ENCODE measurements at regions of chr7 and their contacts with region 1.

Region 1: DNA sequence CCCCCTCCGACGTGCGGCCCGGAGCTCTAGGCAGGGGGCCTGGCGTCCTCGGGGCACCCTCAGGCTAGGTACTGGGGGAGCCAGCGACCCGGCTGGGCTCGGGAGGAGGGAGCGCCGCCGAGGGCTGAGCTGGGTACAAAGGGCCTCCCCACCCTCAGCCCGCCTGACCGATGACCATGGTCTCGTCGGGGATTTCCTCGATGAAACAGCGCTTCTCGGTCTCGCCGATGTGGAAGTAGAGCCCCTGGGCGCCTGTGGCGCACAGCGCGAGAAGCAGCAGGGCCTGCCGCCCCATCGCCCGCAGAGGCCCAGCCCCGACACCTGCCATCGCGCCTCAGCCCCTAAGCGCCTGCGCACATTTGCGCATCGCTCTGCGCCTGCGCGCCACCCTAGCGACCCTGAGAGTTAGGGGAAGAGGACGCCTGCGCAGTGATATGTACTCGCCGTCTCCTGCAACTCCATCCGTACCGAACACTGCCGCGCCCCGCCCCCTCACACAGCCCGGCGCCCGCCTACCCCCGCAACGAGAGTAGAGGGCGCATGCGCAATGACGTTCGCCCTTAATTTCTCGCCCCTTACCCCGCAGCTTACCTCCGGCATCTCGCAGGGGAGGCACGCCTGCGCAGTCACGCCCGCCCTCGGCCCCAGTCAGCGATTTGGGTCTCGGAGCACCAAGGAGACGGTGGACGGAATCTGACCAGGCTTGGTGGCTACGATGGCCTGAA is at the start of gene TMED4:
- DNase-seq: peak; percentile 100
- H3K4me3 ChIP-seq: peak within 1 kb of the TSS; percentile 86
- H3K27ac ChIP-seq: peak within 1 kb of the TSS; percentile 96
- H3K4me1 ChIP-seq: peaks cover 32% of the 10 kb centered on the region
- H3K27me3 ChIP-seq: no peaks in the 10 kb centered on the region
- CTCF ChIP-seq: no peak
- total RNA-seq, gene TMED4: 61.9 TPM

Region 2: DNA sequence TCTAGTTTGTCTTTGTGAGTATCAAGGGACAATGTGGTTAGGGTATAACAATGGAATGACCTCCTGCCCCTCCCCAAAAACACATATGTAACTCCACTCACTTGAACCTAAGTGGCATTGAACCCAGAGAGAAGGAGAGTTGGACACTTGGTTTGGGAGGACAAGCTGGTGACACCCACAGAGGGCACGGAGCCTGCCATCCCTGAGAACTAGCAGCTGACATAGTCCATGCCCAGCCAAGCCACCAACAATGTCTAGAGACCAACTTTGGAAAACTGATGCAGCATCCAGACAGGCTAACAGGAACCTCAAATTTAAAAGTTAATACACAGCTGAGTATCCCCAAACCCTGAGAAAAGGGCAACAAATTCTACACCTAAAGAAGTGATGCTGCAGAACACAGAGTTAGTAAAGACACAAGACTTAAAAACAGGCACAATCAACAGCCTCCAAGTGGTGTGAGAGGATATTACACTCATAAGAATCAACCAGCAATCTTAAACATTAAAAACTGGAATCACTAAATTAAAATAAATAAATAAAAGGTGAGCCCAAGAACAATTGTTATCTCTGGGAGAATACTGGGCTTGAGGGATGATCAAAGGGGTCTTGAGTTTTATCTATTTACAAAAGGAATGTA is 118.8 kb before region 1 on chr7:
- intact Hi-C with region 1: no loop called
- DNase-seq: no peak
- H3K4me3 ChIP-seq: no peak overlapping the region
- H3K27ac ChIP-seq: no peak overlapping the region
- H3K4me1 ChIP-seq: peaks cover 60% of the 10 kb centered on the region
- H3K27me3 ChIP-seq: no peaks in the 10 kb centered on the region
- CTCF ChIP-seq: peak; percentile 36

Region 3: GRCh38 chr7:44847508-44847920 is 265.5 kb after region 1 on chr7:
- intact Hi-C with region 1: loop called (anchors 10 kb)
- DNase-seq: peak; percentile 88
- H3K4me3 ChIP-seq: peak overlapping the region; percentile 76
- H3K27ac ChIP-seq: peak overlapping the region; percentile 98
- H3K4me1 ChIP-seq: peaks cover 60% of the 10 kb centered on the region
- H3K27me3 ChIP-seq: no peaks in the 10 kb centered on the region
- CTCF ChIP-seq: peak; percentile 93

Measured in left ventricle myocardium inferior (tissue), 1 donor.